ENCODE measurements at regions of chr6 and their contacts with region 1.

Region 1: GRCh38 chr6:20455251-20455940 is 53.7 kb downstream of the E2F3 start:
- DNase-seq: peak; percentile 57
- ATAC-seq: peak; percentile 91
- H3K4me3 ChIP-seq: no peak overlapping the region
- H3K27ac ChIP-seq: no peak overlapping the region
- H3K4me1 ChIP-seq: peaks cover 7% of the 10 kb centered on the region
- H3K27me3 ChIP-seq: no peaks in the 10 kb centered on the region
- CTCF ChIP-seq: no peak
- POLR2A ChIP-seq: no peak
- RAD21 ChIP-seq: no peak

Region 2: DNA sequence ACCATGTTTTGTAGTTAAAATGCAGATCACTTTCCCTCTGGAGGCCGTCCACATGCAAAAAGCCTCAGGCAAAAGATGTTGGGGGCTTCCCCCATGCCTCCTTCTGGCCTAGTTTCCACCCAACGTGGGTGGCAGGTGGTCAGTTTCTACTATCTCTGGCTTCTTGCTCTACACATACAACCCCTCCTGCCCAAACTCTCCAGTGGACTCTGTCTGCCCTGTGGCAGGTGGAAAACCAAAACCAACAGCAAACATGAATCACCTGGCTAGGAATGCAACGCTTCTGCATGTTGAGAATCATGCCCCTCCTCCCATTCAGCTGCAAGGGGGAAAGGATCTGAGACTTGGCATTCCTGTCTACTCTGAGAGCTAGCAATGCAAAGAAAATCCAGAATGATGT is 337.9 kb before region 1 on chr6:
- CTCF ChIA-PET with region 1: no interaction called
- POLR2A ChIA-PET with region 1: no interaction called
- dilution Hi-C with region 1: no loop called
- in situ Hi-C with region 1: no loop called
- intact Hi-C with region 1: no loop called
- DNase-seq: peak; percentile 19
- ATAC-seq: no peak
- H3K4me3 ChIP-seq: no peak overlapping the region
- H3K27ac ChIP-seq: no peak overlapping the region
- H3K4me1 ChIP-seq: 0 out of 2 replicates have a peak, but pooled peaks cover 2% of the 10 kb centered on the region
- H3K27me3 ChIP-seq: no peaks in the 10 kb centered on the region
- CTCF ChIP-seq: no peak
- POLR2A ChIP-seq: no peak
- RAD21 ChIP-seq: no peak

Region 3: DNA sequence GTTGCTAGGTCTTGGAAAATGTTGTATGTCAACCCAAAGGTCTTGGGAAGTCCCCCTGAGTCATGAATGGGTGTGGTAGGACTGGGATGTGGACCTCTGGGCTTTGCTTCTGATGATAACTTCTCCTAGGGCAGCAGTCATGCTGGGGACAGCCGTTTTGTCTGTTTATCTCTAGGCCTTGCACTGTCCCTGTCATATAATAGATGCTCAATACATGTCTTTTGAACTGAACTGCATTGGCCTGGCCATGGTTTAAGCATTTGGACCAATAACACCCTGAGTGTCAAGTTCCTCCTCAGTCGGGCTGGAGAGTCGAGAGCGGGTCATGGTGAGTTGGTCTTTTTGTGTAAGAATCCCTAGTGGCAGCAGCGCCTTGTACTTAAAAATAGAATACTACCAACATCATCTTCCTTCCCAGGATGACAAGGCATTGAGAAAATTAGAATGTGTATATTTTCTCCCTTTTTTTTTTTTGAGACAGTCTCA is 10.6 kb before region 1 on chr6:
- CTCF ChIA-PET with region 1: no interaction called
- POLR2A ChIA-PET with region 1: interaction called, 11 read pairs
- dilution Hi-C with region 1: no loop called
- in situ Hi-C with region 1: no loop called
- intact Hi-C with region 1: no loop called
- DNase-seq: peak; percentile 28
- ATAC-seq: no peak
- H3K4me3 ChIP-seq: no peak overlapping the region
- H3K27ac ChIP-seq: no peak overlapping the region
- H3K4me1 ChIP-seq: peaks cover 12% of the 10 kb centered on the region
- H3K27me3 ChIP-seq: no peaks in the 10 kb centered on the region
- CTCF ChIP-seq: no peak
- POLR2A ChIP-seq: no peak
- RAD21 ChIP-seq: no peak

Region 4: DNA sequence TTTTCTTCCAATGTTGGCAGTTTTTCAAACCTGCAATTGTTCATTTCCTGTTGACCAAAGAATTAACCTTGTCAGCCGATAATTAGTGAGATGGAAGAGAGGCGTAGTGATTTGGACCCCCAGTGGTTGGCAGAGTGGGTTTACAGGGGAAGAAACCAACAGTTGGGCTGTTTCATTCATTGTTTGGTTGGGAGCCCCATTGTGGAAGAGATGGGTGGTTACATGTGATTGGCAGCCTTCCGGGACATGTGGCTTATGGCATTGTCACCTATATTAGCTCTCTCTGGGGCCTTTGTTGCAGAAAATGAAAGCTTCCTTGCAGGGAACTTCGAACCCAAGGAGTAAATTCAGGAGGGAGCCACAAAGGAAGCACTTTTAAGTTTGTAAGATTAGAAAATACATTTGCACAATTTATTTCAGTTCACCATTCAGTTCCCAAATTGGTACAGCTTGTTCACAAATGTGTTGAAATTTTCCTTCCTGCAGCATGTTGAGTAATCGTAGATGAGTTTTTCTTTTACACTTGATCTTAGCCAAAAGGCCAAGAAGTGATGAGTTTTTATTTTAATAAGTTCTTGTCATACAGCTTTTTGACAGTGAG is 28.6 kb after region 1 on chr6:
- CTCF ChIA-PET with region 1: no interaction called
- POLR2A ChIA-PET with region 1: interaction called, 12 read pairs
- dilution Hi-C with region 1: no loop called
- in situ Hi-C with region 1: no loop called
- intact Hi-C with region 1: no loop called
- DNase-seq: no peak
- ATAC-seq: no peak
- H3K4me3 ChIP-seq: no peak overlapping the region
- H3K27ac ChIP-seq: no peak overlapping the region
- H3K4me1 ChIP-seq: no peaks in the 10 kb centered on the region
- H3K27me3 ChIP-seq: no peaks in the 10 kb centered on the region
- CTCF ChIP-seq: no peak
- POLR2A ChIP-seq: no peak
- RAD21 ChIP-seq: no peak

Measured in IMR-90 (cell line).